AG04449 (cell line): ENCODE measurements at regions of chr18 and their contacts with region 1.

Region 1: DNA sequence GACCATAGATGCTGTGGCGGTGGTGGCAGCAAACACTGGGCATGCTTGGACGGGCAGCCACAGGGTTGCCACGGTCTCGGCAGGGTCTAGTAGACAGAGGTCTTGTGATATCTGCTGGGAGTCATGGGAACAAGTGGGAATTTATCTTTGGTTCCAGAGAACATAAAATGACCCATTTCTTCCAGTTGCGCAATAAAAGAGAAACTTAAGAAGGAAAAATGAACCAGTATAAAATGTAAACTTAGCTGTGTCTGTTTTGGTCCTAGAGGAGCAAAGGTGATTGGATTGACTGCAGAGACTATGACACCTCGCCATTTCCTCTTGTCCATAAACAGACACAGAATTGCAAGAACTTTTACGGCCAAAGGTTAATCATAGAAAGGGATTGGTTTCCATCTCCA is 132.6 kb upstream of the RBBP8 start:
- DNase-seq: no peak
- H3K4me3 ChIP-seq: no peak overlapping the region
- CTCF ChIP-seq: no peak

Region 2: GRCh38 chr18:22789600-22789999 is 11.0 kb before region 1 on chr18:
- CTCF ChIA-PET with region 1: interaction called, 18 read pairs
- POLR2A ChIA-PET with region 1: no interaction called
- DNase-seq: no peak
- H3K4me3 ChIP-seq: no peak overlapping the region
- CTCF ChIP-seq: no peak

Region 3: DNA sequence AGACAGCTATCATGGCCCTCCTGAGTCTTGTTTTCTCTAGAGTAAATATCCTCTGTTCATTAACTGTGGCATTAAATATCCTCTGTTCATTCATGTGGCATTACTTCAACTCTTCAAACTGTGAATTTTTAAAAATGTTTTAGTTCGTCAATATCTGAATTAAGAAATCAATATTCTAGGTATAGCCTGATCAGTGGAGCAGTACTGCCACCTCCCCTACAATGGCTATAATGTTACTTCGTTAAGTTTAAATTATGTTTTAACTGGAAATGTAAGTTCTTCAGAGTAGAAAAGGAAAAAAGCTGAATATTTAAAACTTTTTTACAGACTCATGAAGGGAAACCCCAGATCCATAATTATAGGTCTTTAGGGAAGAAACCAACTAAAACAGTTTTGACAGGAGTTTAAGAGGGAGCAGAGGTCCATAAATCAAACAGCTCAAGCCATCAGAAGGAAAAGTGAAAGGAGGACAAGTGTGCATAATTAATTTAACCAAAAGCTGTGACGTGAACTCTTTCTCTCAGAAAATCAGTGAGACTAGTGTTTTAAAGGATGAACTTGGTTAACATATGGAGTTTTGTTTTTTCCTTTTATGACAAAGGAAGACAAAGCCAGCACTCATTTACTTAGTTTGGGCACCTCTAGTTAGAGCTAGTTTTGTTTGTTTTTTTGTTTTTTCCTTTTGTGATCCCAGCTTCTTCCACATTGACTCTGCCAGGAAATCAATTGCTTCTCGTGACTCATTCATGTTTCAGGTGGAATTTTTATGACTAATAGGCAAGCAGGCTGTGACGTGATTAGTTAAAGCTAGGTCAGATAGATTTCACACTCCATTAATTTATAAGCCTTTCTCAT is 177.5 kb after region 1 on chr18:
- CTCF ChIA-PET with region 1: interaction called, 56 read pairs
- POLR2A ChIA-PET with region 1: no interaction called
- DNase-seq: peak; percentile 40
- H3K4me3 ChIP-seq: no peak overlapping the region
- CTCF ChIP-seq: no peak

Region 4: DNA sequence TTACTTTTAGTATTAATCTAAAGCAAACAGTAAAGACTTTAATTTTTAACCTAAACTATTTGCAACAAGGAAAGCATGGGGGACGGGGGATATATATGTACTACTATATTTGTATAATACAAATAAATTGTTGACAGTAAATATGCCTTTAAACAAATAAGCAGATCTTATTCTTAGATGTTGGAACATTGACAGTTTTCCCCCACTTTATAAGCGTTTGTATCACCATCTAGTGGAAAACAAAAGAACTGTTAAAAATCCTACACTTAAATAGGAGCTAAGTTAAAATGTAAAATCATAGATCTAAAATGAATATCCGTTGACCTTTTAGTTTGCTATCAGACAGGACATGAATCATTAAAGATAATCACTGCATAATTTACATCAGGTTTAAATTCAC is 182.6 kb after region 1 on chr18:
- CTCF ChIA-PET with region 1: interaction called, 56 read pairs
- POLR2A ChIA-PET with region 1: no interaction called
- DNase-seq: no peak
- H3K4me3 ChIP-seq: no peak overlapping the region
- CTCF ChIP-seq: peak; percentile 25

Region 5: DNA sequence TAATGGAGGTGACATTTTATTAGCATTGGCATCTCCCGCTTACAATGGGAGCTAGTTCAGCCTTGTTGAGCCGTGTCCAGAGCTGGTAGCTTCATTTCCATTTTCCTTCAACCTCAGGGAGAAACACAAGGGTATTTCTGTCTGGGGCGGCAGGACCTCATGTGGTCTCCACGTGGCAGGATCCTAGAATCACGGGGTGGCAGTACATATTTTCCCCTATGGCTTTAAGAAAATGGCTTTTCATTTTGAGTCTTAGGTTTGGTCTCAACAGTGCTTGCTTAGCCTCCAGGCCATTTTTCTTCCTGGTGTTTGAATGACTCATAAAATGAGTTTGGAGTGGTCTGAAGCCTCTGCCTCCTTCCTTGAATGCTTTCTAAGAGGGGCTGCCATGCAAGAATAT is 355.0 kb after region 1 on chr18:
- CTCF ChIA-PET with region 1: no interaction called
- POLR2A ChIA-PET with region 1: no interaction called
- DNase-seq: no peak
- H3K4me3 ChIP-seq: no peak overlapping the region
- CTCF ChIP-seq: no peak

Region 6: DNA sequence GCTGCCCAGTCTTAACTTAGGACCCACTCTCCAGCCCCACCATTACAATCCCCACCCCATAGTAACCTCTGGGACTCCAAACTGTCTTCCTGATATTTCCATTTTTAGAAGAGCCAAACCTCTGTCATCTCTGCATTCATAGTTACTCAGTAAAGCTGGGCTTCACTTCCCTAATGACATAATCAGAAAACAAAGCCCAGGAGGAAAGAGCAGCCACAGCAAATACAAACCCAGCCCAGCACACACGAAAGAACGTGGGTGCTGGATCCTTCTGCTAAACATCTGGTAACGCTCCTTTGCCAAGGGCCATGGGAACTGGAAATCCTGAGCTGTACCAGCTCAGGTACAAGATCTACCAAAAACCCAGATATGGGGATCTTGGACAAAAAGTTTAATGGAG is 615.7 kb after region 1 on chr18:
- CTCF ChIA-PET with region 1: interaction called, 12 read pairs
- POLR2A ChIA-PET with region 1: no interaction called
- DNase-seq: no peak
- H3K4me3 ChIP-seq: no peak overlapping the region
- CTCF ChIP-seq: no peak